ENCODE measurements at regions of chr13 and their contacts with region 1.

Region 1: DNA sequence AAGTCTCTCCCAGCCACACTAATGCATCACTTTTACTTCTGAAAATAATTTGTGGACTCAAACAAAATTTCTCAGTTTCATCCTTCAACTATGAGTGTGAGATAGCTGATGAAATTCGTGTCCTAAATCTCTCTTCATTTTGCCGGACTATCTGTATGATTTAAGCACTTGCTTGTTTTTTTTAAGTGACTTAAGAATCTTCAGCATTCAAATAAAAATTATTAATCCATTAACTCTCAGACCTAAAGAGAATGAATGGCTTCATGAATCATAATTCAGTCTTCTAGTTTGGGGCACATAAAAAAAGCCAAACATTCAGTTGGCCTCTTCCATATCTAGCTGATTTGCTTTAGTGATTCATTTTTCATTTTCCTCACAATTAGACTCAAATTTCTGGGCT is 579.5 kb downstream of the DCT start:
- DNase-seq: no peak
- ATAC-seq: no peak
- H3K4me3 Mint-ChIP-seq: no peak overlapping the region
- H3K27ac Mint-ChIP-seq: no peak overlapping the region
- H3K4me1 Mint-ChIP-seq: no peaks in the 10 kb centered on the region
- H3K27me3 Mint-ChIP-seq: peaks cover 7% of the 10 kb centered on the region
- CTCF ChIP-seq: no peak

Region 2: GRCh38 chr13:93814658-93815057 is 85.3 kb before region 1 on chr13:
- CTCF ChIA-PET with region 1: no interaction called
- POLR2A ChIA-PET with region 1: no interaction called
- intact Hi-C with region 1: no loop called
- DNase-seq: no peak
- ATAC-seq: no peak
- H3K4me3 Mint-ChIP-seq: no peak overlapping the region
- H3K27ac Mint-ChIP-seq: no peak overlapping the region
- H3K4me1 Mint-ChIP-seq: no peaks in the 10 kb centered on the region
- H3K27me3 Mint-ChIP-seq: peaks cover 12% of the 10 kb centered on the region
- CTCF ChIP-seq: no peak

Region 3: GRCh38 chr13:93926425-93926824 is 26.4 kb after region 1 on chr13:
- CTCF ChIA-PET with region 1: no interaction called
- POLR2A ChIA-PET with region 1: no interaction called
- intact Hi-C with region 1: loop called (anchors 2 kb)
- DNase-seq: no peak
- ATAC-seq: no peak
- H3K4me3 Mint-ChIP-seq: no peak overlapping the region
- H3K27ac Mint-ChIP-seq: no peak overlapping the region
- H3K4me1 Mint-ChIP-seq: no peaks in the 10 kb centered on the region
- H3K27me3 Mint-ChIP-seq: peaks cover 3% of the 10 kb centered on the region
- CTCF ChIP-seq: no peak

Region 4: DNA sequence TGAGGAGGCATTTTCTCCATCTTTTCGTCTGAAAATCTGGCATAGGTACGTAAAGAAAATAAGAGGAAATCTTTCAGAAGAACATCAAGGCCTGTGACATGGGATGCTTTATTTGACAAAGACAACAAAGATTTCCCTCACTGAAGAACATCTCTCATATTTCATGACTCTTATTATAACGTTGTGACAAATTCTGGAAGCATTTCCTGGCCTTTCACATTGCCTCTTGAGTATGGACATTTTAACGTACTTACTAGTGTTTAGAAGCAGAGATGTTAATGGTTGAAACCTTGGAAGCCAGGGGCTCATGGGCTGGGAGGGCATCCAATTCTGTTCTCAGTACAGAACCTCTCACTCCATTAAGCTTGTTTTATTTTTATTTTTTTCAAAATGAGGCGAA is 368.7 kb after region 1 on chr13:
- CTCF ChIA-PET with region 1: no interaction called
- POLR2A ChIA-PET with region 1: no interaction called
- intact Hi-C with region 1: no loop called
- DNase-seq: no peak
- ATAC-seq: no peak
- H3K4me3 Mint-ChIP-seq: no peak overlapping the region
- H3K27ac Mint-ChIP-seq: no peak overlapping the region
- H3K4me1 Mint-ChIP-seq: peaks cover 9% of the 10 kb centered on the region
- H3K27me3 Mint-ChIP-seq: no peaks in the 10 kb centered on the region
- CTCF ChIP-seq: no peak